Activated B cell treated with CpG ODN at 0.5 μM for 24 hours (primary cell): ENCODE measurements at regions of chr15 and their contacts with region 1.

Region 1: DNA sequence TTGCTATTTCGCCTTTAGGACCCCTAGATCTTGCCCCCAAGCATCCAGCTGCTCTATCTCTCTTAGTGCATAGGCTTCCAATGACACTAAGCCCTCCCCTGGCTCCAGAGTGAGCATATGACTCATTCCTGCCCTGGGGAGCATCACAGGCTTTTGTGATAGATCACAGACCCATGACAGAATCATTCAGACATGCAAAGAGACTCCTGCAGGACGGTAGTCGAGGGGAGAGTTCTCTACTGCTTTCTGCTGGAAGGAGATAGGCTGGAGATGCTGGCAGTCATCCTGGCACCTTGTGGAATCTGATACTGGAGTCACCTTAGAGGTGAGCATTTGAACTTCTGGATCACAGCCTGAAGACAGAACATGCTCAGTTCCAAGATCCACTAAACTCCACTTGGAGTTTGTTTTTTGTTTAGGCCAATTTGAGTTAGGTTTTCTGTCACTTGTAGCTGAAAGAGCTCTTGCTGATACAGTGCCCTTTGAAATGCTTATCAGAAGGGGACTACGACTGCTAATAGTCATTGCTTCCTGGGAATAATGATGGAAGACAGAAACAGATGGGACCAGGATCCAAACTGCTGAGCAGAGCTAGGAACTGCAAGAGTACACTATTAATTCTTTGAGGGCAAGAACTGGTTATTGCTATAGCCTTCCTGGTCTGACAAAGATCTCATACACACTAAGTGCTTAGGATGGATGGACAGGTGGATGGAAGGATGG is 10.9 kb downstream of the LYSMD2 start:
- DNase-seq: no peak
- ATAC-seq: peak; percentile 97
- H3K4me3 Mint-ChIP-seq: peak overlapping the region; percentile 52
- H3K27ac Mint-ChIP-seq: peak overlapping the region; percentile 59
- H3K4me1 Mint-ChIP-seq: peaks cover 74% of the 10 kb centered on the region
- H3K27me3 Mint-ChIP-seq: no peaks in the 10 kb centered on the region
- CTCF ChIP-seq: no peak

Region 2: GRCh38 chr15:51505251-51505650 is 221.3 kb before region 1 on chr15:
- CTCF ChIA-PET with region 1: no interaction called
- POLR2A ChIA-PET with region 1: no interaction called
- intact Hi-C with region 1: no loop called
- DNase-seq: no peak
- ATAC-seq: no peak
- H3K4me3 Mint-ChIP-seq: no peak overlapping the region
- H3K27ac Mint-ChIP-seq: no peak overlapping the region
- H3K4me1 Mint-ChIP-seq: no peaks in the 10 kb centered on the region
- H3K27me3 Mint-ChIP-seq: no peaks in the 10 kb centered on the region
- CTCF ChIP-seq: no peak

Region 3: DNA sequence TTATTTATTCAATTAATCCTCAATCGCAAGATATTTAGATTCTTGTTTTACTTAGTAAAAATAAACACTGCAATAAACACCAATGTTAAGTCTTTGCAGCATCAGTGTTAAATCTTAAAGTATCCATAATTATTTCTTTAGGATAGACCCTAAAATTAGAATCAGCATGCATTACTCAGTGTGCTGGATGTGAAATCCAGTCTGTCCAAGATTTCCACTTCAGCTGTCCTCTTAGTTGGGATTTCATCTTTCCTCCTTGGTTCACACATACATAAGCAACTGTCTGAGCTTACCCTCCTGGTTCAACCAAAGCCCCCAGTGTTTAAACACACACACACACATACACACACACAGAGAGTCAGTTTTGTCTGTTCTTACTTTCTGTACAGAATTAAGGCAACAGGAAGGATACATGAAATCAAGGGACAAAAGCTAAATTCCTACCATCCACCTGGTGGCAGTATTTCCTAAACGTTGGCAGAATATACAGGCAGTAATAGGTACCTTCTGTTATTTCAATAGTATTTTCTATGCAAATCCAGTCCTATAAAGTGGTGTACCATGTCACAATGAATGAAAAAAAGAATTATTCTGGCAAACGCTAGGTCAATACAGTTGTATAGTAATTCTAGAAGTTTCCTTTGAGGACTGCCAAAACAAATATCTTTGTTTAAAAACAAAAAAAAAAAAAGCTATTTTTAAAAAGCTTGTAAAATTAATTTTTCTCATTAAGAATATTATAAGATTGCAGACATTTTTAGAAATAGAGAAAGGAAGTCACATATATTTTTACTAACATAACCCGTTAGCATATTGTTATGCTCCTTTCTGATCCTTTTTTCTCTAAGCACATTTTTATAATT is 76.6 kb before region 1 on chr15:
- CTCF ChIA-PET with region 1: interaction called, 35 read pairs
- POLR2A ChIA-PET with region 1: interaction called, 5 read pairs
- intact Hi-C with region 1: loop called (anchors 2 kb)
- DNase-seq: no peak
- ATAC-seq: peak; percentile 84
- H3K4me3 Mint-ChIP-seq: no peak overlapping the region
- H3K27ac Mint-ChIP-seq: no peak overlapping the region
- H3K4me1 Mint-ChIP-seq: no peaks in the 10 kb centered on the region
- H3K27me3 Mint-ChIP-seq: no peaks in the 10 kb centered on the region
- CTCF ChIP-seq: no peak

Region 4: GRCh38 chr15:51681303-51681963 is 45.1 kb before region 1 on chr15 and contains the start of gene SCG3:
- CTCF ChIA-PET with region 1: no interaction called
- POLR2A ChIA-PET with region 1: interaction called, 7 read pairs
- intact Hi-C with region 1: loop called (anchors 5 kb)
- DNase-seq: peak; percentile 39
- ATAC-seq: peak; percentile 60
- H3K4me3 Mint-ChIP-seq: no peak within 1 kb of the TSS
- H3K27ac Mint-ChIP-seq: no peak within 1 kb of the TSS
- H3K4me1 Mint-ChIP-seq: peaks cover 2% of the 10 kb centered on the region
- H3K27me3 Mint-ChIP-seq: peaks cover 44% of the 10 kb centered on the region
- CTCF ChIP-seq: no peak
- total RNA-seq, gene SCG3: not detected in 2 replicates

Region 5: GRCh38 chr15:51750792-51751685 is 24.5 kb after region 1 on chr15 and contains the start of gene TMOD2:
- CTCF ChIA-PET with region 1: interaction called, 3 read pairs
- POLR2A ChIA-PET with region 1: interaction called, 15 read pairs
- intact Hi-C with region 1: loop called (anchors 1 kb)
- DNase-seq: peak; percentile 62
- ATAC-seq: peak; percentile 83
- H3K4me3 Mint-ChIP-seq: peak within 1 kb of the TSS; percentile 96
- H3K27ac Mint-ChIP-seq: peak within 1 kb of the TSS; percentile 86
- H3K4me1 Mint-ChIP-seq: peaks cover 37% of the 10 kb centered on the region
- H3K27me3 Mint-ChIP-seq: no peaks in the 10 kb centered on the region
- CTCF ChIP-seq: no peak
- total RNA-seq, gene TMOD2: 11.3 and 14.6 TPM in 2 replicates